ENCODE measurements at regions of chr11 and their contacts with region 1.

Region 1: GRCh38 chr11:26297189-26297975 is 34.5 kb upstream of the ANO3 start:
- DNase-seq: peak in 1 of 3 donors; percentile 50
- ATAC-seq: peak; percentile 56
- H3K4me3 ChIP-seq: no peak overlapping the region
- H3K4me1 ChIP-seq: no peaks in the 10 kb centered on the region
- CTCF ChIP-seq: no peak

Region 2: GRCh38 chr11:26649884-26650283 is 352.5 kb after region 1 on chr11:
- intact Hi-C with region 1: loop called in 1 of 2 experiments (anchors 10 kb)
- DNase-seq: peak in 2 of 3 donors; percentile 19 to 91
- ATAC-seq: peak; percentile 85
- H3K4me3 ChIP-seq: no peak overlapping the region
- H3K4me1 ChIP-seq: no peaks in the 10 kb centered on the region
- CTCF ChIP-seq: peak; percentile 23

Measured in mucosa of descending colon (tissue), 3 donors.